ENCODE measurements at regions of chr1 and their contacts with region 1.

Region 1: DNA sequence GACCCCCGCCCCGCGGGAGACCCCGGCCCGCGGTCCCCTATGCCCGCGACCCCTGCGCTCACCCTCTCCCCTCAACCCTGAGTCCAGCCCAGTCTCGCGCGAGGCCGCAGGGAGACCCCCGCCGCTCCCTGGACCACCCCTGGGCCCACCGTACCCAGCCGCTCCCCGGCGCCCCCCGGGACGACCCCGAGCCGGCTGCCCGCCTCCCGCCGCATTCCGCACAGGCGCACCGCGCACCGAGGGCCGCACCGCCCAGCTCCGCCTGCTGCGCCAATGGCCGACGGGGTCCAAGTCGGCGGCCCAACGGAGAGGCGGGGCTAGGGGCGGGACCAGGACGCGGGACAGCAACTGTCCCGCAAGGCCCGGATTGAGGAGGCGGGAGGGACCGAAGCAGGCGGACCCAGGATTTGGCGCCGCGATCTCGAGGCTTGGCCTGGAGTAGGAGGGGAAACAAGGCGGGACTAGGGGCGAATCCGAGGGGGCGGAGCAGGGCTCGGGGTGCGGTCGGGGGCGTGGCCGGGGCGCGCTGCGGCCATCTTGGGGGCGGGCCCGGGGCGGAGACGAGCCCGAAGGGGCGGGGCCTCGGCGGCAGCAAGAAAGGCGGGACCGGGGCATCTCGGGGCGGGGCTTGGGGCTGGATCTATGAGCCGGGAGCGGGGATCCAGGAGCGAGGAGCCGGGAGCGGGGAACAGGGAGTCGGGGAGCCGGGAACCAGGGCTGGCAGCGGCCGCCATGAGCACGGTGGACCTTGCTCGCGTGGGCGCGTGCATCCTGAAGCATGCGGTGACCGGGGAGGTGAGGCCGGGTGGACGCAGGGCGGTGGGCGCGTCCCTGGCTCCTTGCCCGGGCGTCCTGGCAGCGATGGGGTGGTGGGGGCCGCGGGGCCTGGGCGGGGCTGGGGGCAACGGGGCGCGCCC is at the start of gene PRXL2B:
- DNase-seq: peak; percentile 98
- H3K4me3 ChIP-seq: peak within 1 kb of the TSS; percentile 56 to 73 (median 61)
- H3K27ac ChIP-seq: peak within 1 kb of the TSS; percentile 75
- H3K4me1 ChIP-seq: peaks cover 15% of the 10 kb centered on the region
- H3K27me3 ChIP-seq: no peaks in the 10 kb centered on the region
- CTCF ChIP-seq: no peak
- POLR2A ChIP-seq: peak; percentile 33
- total RNA-seq, gene PRXL2B: 55.8 and 56.8 TPM in 2 replicates

Region 2: DNA sequence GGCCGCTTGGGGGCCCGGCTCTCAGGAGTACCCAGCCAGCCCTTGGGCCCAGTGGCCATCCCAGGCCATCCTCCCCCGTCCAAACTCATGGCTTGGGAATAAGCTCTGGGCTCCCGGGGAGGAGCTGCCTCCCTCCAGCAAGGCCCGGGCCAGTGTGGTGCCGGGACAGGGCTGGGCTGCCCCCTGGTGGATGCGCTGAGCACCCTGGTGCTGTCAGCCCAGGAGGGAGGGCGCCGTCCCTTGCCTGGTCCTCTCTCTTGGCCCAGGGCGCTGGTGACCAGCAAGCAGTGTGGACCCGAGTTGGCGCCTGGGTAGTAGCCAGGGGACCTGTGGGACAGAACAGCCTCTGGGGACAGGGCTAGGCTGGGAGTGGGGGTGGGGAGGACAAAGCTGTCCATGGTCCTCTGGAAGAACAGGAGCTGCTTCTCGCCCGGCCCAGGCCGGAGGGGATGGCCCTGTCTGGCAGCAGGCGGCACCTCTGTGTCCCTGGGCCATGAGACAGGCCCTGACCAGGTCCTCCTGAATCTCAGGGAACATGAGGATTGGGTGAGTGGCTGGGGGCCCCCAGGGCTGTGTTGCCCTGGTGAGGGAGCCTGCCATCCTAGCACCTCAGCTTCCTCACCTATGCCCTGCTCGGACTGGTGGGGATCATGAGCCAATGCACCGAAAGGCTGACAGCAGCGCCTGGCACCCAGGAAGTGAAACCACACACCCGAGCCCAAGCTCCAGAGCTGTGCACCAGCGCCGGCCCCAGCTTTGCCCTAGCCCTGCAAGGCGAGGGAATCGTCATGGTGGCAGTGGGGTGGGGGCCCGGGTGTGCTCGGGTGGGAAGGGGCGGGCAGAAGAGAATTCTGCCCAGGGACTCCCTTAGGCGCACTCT is 204.4 kb before region 1 on chr1:
- CTCF ChIA-PET with region 1: no interaction called
- POLR2A ChIA-PET with region 1: no interaction called
- dilution Hi-C with region 1: no loop called
- intact Hi-C with region 1: no loop called
- DNase-seq: peak; percentile 65
- H3K4me3 ChIP-seq: no peak overlapping the region
- H3K27ac ChIP-seq: no peak overlapping the region
- H3K4me1 ChIP-seq: no peaks in the 10 kb centered on the region
- H3K27me3 ChIP-seq: no peaks in the 10 kb centered on the region
- CTCF ChIP-seq: peak; percentile 95 to 97
- POLR2A ChIP-seq: no peak

Region 3: DNA sequence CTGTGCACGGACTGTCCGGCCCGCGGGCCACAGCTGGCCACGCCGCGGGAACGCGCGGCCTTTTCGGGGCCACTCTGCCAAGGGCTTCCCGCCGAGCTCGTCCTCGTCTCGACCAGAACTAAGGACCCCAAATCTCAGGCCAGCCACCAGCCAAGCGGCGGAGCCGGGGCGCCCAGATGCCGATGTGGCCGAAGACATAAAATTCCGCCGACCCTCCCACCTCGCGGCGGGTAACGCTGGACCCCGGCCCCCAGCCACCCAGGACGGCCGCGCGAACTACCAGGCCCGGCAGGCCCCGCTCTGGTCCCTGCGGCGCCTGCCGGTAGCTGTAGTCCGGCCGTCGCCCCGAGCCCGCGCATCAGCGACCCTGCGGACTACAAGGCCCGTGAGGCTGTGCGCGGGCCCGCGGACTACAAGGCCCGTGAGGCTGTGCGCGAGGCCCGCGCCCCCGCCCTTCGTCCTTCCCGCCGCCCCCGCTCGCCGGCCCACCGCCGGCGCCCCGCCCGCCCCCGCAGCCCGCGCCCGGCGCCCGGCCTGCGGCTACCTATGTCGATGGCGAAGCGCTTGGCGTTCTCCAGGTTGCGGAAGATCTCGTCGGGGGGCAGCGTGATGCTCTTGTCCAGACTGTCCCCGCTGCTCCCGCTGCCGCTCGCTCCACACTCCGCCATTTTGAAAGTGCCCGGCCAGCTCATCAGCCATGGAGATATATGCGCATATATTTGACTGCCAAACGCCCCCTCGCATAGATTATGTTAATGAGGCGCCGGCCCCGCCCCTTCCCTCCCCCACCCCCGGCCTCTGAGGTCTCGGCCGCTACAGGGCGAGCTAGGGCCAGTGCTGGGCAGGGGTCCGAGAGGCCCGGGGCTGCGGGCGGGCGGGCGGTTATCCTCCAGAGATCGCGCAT is 60.2 kb before region 1 on chr1 and contains the start of gene PANK4:
- CTCF ChIA-PET with region 1: interaction called, 3 read pairs
- POLR2A ChIA-PET with region 1: no interaction called
- dilution Hi-C with region 1: no loop called
- intact Hi-C with region 1: loop called (anchors 1 kb)
- DNase-seq: peak; percentile 84
- H3K4me3 ChIP-seq: peak within 1 kb of the TSS; percentile 75 to 97 (median 91)
- H3K27ac ChIP-seq: peak within 1 kb of the TSS; percentile 58
- H3K4me1 ChIP-seq: peaks cover 17% of the 10 kb centered on the region
- H3K27me3 ChIP-seq: peaks cover 10 to 17% of the 10 kb centered on the region in 2 experiments
- CTCF ChIP-seq: no peak
- POLR2A ChIP-seq: peak; percentile 82
- total RNA-seq, gene PANK4: 34.0 and 34.7 TPM in 2 replicates

Region 4: GRCh38 chr1:2556277-2556677 is 30.1 kb before region 1 on chr1 and contains the start of gene TNFRSF14:
- CTCF ChIA-PET with region 1: interaction called, 14 read pairs
- POLR2A ChIA-PET with region 1: interaction called, 3 read pairs
- dilution Hi-C with region 1: no loop called
- intact Hi-C with region 1: loop called (anchors 1 kb)
- DNase-seq: peak; percentile 65
- H3K4me3 ChIP-seq: peak within 1 kb of the TSS; percentile 15 to 38 (median 28)
- H3K27ac ChIP-seq: peak within 1 kb of the TSS; percentile 53
- H3K4me1 ChIP-seq: peaks cover 23% of the 10 kb centered on the region
- H3K27me3 ChIP-seq: no peaks in the 10 kb centered on the region
- CTCF ChIP-seq: peak in 1 of 2 donors; percentile 17
- POLR2A ChIP-seq: no peak
- total RNA-seq, gene TNFRSF14: 36.4 and 40.9 TPM in 2 replicates

Region 5: GRCh38 chr1:2561898-2562545 is 24.4 kb before region 1 on chr1:
- CTCF ChIA-PET with region 1: interaction called, 14 read pairs
- POLR2A ChIA-PET with region 1: no interaction called
- dilution Hi-C with region 1: no loop called
- intact Hi-C with region 1: no loop called
- DNase-seq: no peak
- H3K4me3 ChIP-seq: no peak overlapping the region
- H3K27ac ChIP-seq: no peak overlapping the region
- H3K4me1 ChIP-seq: no peaks in the 10 kb centered on the region
- H3K27me3 ChIP-seq: no peaks in the 10 kb centered on the region
- CTCF ChIP-seq: peak; percentile 20 to 23
- POLR2A ChIP-seq: no peak

Region 6: DNA sequence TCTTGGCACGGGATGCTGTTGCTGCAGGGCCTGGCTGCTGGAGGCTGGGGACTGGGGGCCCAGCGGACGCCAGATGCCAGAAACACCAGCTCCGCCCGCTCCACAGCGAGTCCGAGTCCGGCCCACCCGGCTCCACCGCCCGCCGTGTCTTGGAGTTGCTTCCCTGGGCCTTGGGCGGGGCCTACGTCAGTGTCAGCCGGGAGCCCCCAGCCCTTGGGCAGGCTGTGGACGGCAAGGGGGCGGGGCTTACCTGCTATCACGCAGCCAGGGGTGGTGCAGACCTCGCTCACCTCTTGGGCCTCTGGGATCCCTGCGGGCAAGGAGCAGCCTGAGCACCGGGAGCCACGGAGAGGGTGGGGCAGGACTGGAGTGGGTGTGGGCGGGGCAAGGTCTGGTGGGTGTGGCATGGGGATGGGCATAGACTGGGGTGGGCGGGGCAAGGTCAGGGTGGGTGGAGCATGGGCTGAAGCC is 24.7 kb after region 1 on chr1:
- CTCF ChIA-PET with region 1: no interaction called
- POLR2A ChIA-PET with region 1: no interaction called
- dilution Hi-C with region 1: no loop called
- intact Hi-C with region 1: loop called (anchors 1 kb)
- DNase-seq: peak; percentile 12
- H3K4me3 ChIP-seq: no peak overlapping the region
- H3K27ac ChIP-seq: no peak overlapping the region
- H3K4me1 ChIP-seq: no peaks in the 10 kb centered on the region
- H3K27me3 ChIP-seq: no peaks in the 10 kb centered on the region
- CTCF ChIP-seq: no peak
- POLR2A ChIP-seq: no peak

Measured in endothelial cell of umbilical vein (primary cell).